Breast epithelium (tissue), 4 donors: ENCODE measurements at regions of chr3 and their contacts with region 1.

Region 1: GRCh38 chr3:126714276-126714900 is 10.3 kb downstream of the CHCHD6 start:
- DNase-seq: no peak
- H3K4me3 ChIP-seq: no peak overlapping the region
- H3K27ac ChIP-seq: no peak overlapping the region
- H3K4me1 ChIP-seq: no peaks in the 10 kb centered on the region
- H3K27me3 ChIP-seq: no peaks in the 10 kb centered on the region
- CTCF ChIP-seq: no peak
- POLR2A ChIP-seq: no peak

Region 2: GRCh38 chr3:126703512-126704462 is 10.6 kb before region 1 on chr3 and contains the start of gene CHCHD6:
- intact Hi-C with region 1: loop called (anchors 1 kb)
- DNase-seq: peak; percentile 93 to 96
- H3K4me3 ChIP-seq: peak within 1 kb of the TSS; percentile 71 to 99 (median 98)
- H3K27ac ChIP-seq: no peak within 1 kb of the TSS
- H3K4me1 ChIP-seq: peaks cover 0 to 5% of the 10 kb centered on the region in 2 donors
- H3K27me3 ChIP-seq: no peaks in the 10 kb centered on the region
- CTCF ChIP-seq: no peak
- POLR2A ChIP-seq: no peak
- total RNA-seq, gene CHCHD6: 12.2 to 21.2 (median 19.3) TPM

Region 3: DNA sequence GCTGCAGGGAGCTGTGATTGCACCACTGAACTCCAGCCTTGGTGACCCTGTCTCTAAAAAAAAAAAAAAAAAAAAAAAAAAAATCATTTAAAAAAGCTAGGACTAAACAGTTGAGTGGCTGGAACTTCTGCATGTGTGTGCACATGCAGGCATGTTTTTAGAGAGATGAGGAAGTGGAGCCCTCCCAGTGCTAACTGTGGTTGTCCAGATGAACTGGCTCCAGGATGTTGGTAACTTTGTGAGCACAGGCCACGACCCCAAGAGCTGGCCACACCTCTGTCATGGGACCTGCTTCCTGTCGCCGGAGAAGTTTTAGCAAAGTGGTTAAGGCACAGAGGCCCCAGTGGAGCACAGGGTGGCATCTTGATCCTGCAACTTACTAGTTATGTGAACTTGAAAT is 16.7 kb after region 1 on chr3:
- intact Hi-C with region 1: no loop called
- DNase-seq: no peak
- H3K4me3 ChIP-seq: no peak overlapping the region
- H3K27ac ChIP-seq: no peak overlapping the region
- H3K4me1 ChIP-seq: no peaks in the 10 kb centered on the region
- H3K27me3 ChIP-seq: no peaks in the 10 kb centered on the region
- CTCF ChIP-seq: no peak
- POLR2A ChIP-seq: no peak

Region 4: GRCh38 chr3:127275287-127275781 is 560.9 kb after region 1 on chr3:
- intact Hi-C with region 1: no loop called
- DNase-seq: peak in 1 of 2 donors; percentile 90
- H3K4me3 ChIP-seq: peak overlapping the region in 1 of 3 donors; percentile 7
- H3K27ac ChIP-seq: peak overlapping the region; percentile 77 to 84
- H3K4me1 ChIP-seq: peaks cover 3 to 14% of the 10 kb centered on the region in 2 donors
- H3K27me3 ChIP-seq: no peaks in the 10 kb centered on the region
- CTCF ChIP-seq: no peak
- POLR2A ChIP-seq: no peak